ENCODE measurements at regions of chr2 and their contacts with region 1.

Region 1: DNA sequence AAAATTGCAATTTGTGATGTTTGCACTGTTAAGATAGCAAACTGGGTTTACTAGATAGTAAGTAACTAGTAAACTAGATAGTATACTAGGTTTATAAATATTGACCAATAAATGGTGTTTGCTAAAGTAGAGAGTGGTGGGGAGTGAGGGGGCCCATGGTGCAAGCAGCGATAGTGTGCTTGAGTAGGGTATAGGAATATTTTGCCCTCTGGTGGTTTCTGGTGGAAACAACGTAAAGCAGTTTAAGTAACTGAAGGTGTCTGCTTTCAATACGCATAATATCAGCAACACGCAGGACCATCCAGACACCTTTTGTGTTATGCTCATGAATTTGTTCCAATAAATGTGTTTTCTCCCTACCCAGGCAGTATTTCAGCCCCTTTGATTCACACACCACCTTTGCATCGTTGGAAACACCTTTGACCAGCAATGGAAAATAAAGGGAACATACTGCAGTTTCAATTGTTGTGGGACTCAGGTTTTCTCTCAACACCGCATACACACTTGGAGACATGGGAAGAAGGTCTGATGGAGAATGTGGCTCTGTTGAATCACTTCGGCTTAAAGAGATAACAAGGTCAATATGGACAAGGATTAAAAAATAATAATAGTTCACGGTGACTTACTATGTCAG is 16.7 kb upstream of the STAT1 start:
- DNase-seq: peak; percentile 41
- H3K4me3 Mint-ChIP-seq: no peak overlapping the region
- H3K27ac Mint-ChIP-seq: peak overlapping the region; percentile 18
- H3K4me1 Mint-ChIP-seq: peaks cover 47% of the 10 kb centered on the region
- H3K27me3 Mint-ChIP-seq: no peaks in the 10 kb centered on the region

Region 2: GRCh38 chr2:190781604-190782198 is 248.9 kb before region 1 on chr2:
- CTCF ChIA-PET with region 1: no interaction called
- POLR2A ChIA-PET with region 1: no interaction called
- intact Hi-C with region 1: loop called (anchors 1 kb)
- DNase-seq: peak; percentile 66
- H3K4me3 Mint-ChIP-seq: no peak overlapping the region
- H3K27ac Mint-ChIP-seq: no peak overlapping the region
- H3K4me1 Mint-ChIP-seq: peaks cover 22% of the 10 kb centered on the region
- H3K27me3 Mint-ChIP-seq: peaks cover 9% of the 10 kb centered on the region

Region 3: GRCh38 chr2:190996338-190996946 is 34.2 kb before region 1 on chr2:
- CTCF ChIA-PET with region 1: no interaction called
- POLR2A ChIA-PET with region 1: no interaction called
- intact Hi-C with region 1: loop called (anchors 5 kb)
- DNase-seq: no peak
- H3K4me3 Mint-ChIP-seq: no peak overlapping the region
- H3K27ac Mint-ChIP-seq: peak overlapping the region; percentile 86
- H3K4me1 Mint-ChIP-seq: peaks cover 52% of the 10 kb centered on the region
- H3K27me3 Mint-ChIP-seq: no peaks in the 10 kb centered on the region

Region 4: DNA sequence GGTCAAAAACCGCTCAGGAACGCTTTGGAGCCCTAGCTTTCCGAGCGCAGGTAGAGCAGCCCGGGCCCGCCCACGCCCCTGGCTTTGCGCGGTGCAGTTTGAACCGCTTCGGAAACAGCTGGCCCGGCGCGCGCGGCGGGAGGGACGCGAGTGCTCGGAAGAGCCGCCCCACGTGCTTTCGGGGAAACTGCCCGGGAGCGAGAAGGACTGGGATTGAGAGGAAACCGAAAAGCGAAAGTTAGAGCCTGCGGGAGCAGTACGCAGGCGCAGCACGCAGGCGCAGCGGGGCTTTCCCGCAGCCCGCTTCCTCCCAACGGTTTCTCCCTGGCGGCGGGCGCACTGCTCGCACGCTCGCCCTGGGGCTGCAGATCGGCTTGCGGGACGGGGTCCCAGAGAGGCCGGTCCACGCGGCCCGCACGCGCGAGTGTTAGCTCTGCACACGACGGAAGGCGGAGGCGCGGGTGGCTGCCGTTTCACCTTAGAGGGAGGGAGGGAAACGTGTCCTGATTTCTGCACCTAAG is 10.4 kb before region 1 on chr2:
- CTCF ChIA-PET with region 1: interaction called, 8 read pairs
- POLR2A ChIA-PET with region 1: interaction called, 11 read pairs
- intact Hi-C with region 1: no loop called
- DNase-seq: peak; percentile 97
- H3K4me3 Mint-ChIP-seq: no peak overlapping the region
- H3K27ac Mint-ChIP-seq: no peak overlapping the region
- H3K4me1 Mint-ChIP-seq: peaks cover 34% of the 10 kb centered on the region
- H3K27me3 Mint-ChIP-seq: peaks cover 2% of the 10 kb centered on the region

Measured in activated CD4-positive, alpha-beta memory T cell treated with anti-CD3 and anti-CD28 coated beads for 36 hours (primary cell).